ENCODE measurements at regions of chr17 and their contacts with region 1.

Region 1: DNA sequence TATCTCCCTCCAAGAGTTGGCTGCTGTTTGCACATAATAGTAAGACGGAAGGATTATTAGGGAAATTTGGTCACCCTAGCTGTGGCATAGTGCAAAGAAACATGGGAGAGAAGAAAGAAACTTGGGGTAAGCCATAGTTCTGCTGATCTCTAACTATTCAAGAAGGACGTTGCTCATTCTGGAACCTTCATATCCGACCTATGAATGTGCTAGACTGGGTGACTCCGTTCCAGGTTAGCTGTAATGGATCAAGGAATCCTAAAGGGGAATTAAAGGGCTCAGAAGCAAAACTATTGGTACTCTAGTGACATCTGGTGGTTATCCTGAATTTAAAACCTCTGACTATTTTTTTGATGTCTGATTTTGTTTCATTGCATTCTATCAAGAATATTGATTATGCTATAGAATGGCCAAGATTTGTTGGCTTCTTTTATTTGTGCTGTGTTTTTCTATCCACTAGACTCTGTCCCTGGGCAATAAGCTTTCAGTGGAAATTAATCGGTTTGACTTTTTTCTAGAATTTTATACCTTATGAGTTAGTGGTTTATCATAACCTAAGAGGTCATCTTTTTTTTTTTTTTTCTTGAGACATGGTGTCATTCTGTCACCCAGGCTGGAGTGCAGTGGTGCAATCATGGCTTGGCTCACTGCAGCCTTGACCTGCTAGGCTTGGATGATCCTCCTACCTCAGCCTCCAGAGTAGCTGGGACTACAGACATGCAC is 19.5 kb downstream of the PCTP start:
- DNase-seq: peak; percentile 68
- ATAC-seq: peak; percentile 67
- H3K4me3 ChIP-seq: no peak overlapping the region
- H3K27ac ChIP-seq: no peak overlapping the region
- H3K4me1 ChIP-seq: peaks cover 26% of the 10 kb centered on the region
- H3K27me3 ChIP-seq: no peaks in the 10 kb centered on the region
- CTCF ChIP-seq: peak; percentile 66
- EP300 ChIP-seq: no peak
- POLR2A ChIP-seq: no peak
- RAD21 ChIP-seq: peak; percentile 79

Region 2: GRCh38 chr17:55487695-55488429 is 282.4 kb before region 1 on chr17:
- CTCF ChIA-PET with region 1: no interaction called
- POLR2A ChIA-PET with region 1: no interaction called
- in situ Hi-C with region 1: no loop called
- intact Hi-C with region 1: no loop called
- DNase-seq: peak; percentile 55
- ATAC-seq: peak; percentile 98
- H3K4me3 ChIP-seq: no peak overlapping the region
- H3K27ac ChIP-seq: no peak overlapping the region
- H3K4me1 ChIP-seq: peaks cover 22% of the 10 kb centered on the region
- H3K27me3 ChIP-seq: no peaks in the 10 kb centered on the region
- CTCF ChIP-seq: no peak
- EP300 ChIP-seq: peak in 1 of 2 experiments; percentile 15; a peak in 1 of 4 replicates
- POLR2A ChIP-seq: no peak
- RAD21 ChIP-seq: no peak

Region 3: GRCh38 chr17:55601874-55602364 is 168.4 kb before region 1 on chr17:
- CTCF ChIA-PET with region 1: no interaction called
- POLR2A ChIA-PET with region 1: no interaction called
- in situ Hi-C with region 1: no loop called
- intact Hi-C with region 1: loop called (anchors 2 kb)
- DNase-seq: peak; percentile 39
- ATAC-seq: peak; percentile 89
- H3K4me3 ChIP-seq: no peak overlapping the region
- H3K27ac ChIP-seq: no peak overlapping the region
- H3K4me1 ChIP-seq: no peaks in the 10 kb centered on the region
- H3K27me3 ChIP-seq: no peaks in the 10 kb centered on the region
- CTCF ChIP-seq: peak; percentile 71
- EP300 ChIP-seq: no peak
- POLR2A ChIP-seq: no peak
- RAD21 ChIP-seq: peak; percentile 55; the same call in 1 of the 2 replicates

Region 4: GRCh38 chr17:55625521-55625920 is 144.8 kb before region 1 on chr17:
- CTCF ChIA-PET with region 1: no interaction called
- POLR2A ChIA-PET with region 1: no interaction called
- in situ Hi-C with region 1: no loop called
- intact Hi-C with region 1: no loop called
- DNase-seq: no peak
- ATAC-seq: no peak
- H3K4me3 ChIP-seq: no peak overlapping the region
- H3K27ac ChIP-seq: no peak overlapping the region
- H3K4me1 ChIP-seq: no peaks in the 10 kb centered on the region
- H3K27me3 ChIP-seq: no peaks in the 10 kb centered on the region
- CTCF ChIP-seq: no peak
- EP300 ChIP-seq: no peak
- POLR2A ChIP-seq: no peak
- RAD21 ChIP-seq: no peak

Region 5: GRCh38 chr17:55717898-55718735 is 52.2 kb before region 1 on chr17:
- CTCF ChIA-PET with region 1: interaction called, 10 read pairs
- POLR2A ChIA-PET with region 1: no interaction called
- in situ Hi-C with region 1: no loop called
- intact Hi-C with region 1: no loop called
- DNase-seq: peak; percentile 78
- ATAC-seq: peak; percentile 86
- H3K4me3 ChIP-seq: no peak overlapping the region
- H3K27ac ChIP-seq: no peak overlapping the region
- H3K4me1 ChIP-seq: no peaks in the 10 kb centered on the region
- H3K27me3 ChIP-seq: peaks cover 0 to 41% of the 10 kb centered on the region in 2 experiments; a peak in 3 of 5 replicates
- CTCF ChIP-seq: peak; percentile 74
- EP300 ChIP-seq: no peak
- POLR2A ChIP-seq: no peak
- RAD21 ChIP-seq: 0 out of 2 replicates have a peak, but pooled peaks have one; percentile 24

Region 6: GRCh38 chr17:55735731-55736405 is 34.4 kb before region 1 on chr17:
- CTCF ChIA-PET with region 1: no interaction called
- POLR2A ChIA-PET with region 1: no interaction called
- in situ Hi-C with region 1: loop called (anchors 5 kb)
- intact Hi-C with region 1: no loop called
- DNase-seq: peak; percentile 54
- ATAC-seq: peak; percentile 74
- H3K4me3 ChIP-seq: no peak overlapping the region
- H3K27ac ChIP-seq: no peak overlapping the region
- H3K4me1 ChIP-seq: peaks cover 11% of the 10 kb centered on the region
- H3K27me3 ChIP-seq: peaks cover 0 to 15% of the 10 kb centered on the region in 2 experiments; a peak in 1 of 5 replicates
- CTCF ChIP-seq: peak; percentile 69
- EP300 ChIP-seq: no peak
- POLR2A ChIP-seq: no peak
- RAD21 ChIP-seq: no peak

Region 7: GRCh38 chr17:55743103-55743679 is 27.1 kb before region 1 on chr17:
- CTCF ChIA-PET with region 1: interaction called, 17 read pairs
- POLR2A ChIA-PET with region 1: interaction called, 3 read pairs
- in situ Hi-C with region 1: loop called (anchors 5 kb)
- intact Hi-C with region 1: loop called (anchors 1 kb)
- DNase-seq: peak; percentile 88
- ATAC-seq: peak; percentile 78
- H3K4me3 ChIP-seq: peak overlapping the region in 2 of 3 experiments; percentile 33 to 34; a peak in 3 of 6 replicates
- H3K27ac ChIP-seq: no peak overlapping the region
- H3K4me1 ChIP-seq: peaks cover 45% of the 10 kb centered on the region
- H3K27me3 ChIP-seq: no peaks in the 10 kb centered on the region
- CTCF ChIP-seq: no peak
- EP300 ChIP-seq: peak in 1 of 2 experiments; percentile 50; a peak in 2 of 4 replicates
- POLR2A ChIP-seq: no peak
- RAD21 ChIP-seq: no peak

Region 8: GRCh38 chr17:55806745-55807495 is 36.6 kb after region 1 on chr17:
- CTCF ChIA-PET with region 1: no interaction called
- POLR2A ChIA-PET with region 1: no interaction called
- in situ Hi-C with region 1: no loop called
- intact Hi-C with region 1: no loop called
- DNase-seq: no peak
- ATAC-seq: no peak
- H3K4me3 ChIP-seq: no peak overlapping the region
- H3K27ac ChIP-seq: no peak overlapping the region
- H3K4me1 ChIP-seq: no peaks in the 10 kb centered on the region
- H3K27me3 ChIP-seq: no peaks in the 10 kb centered on the region
- CTCF ChIP-seq: no peak
- EP300 ChIP-seq: no peak
- POLR2A ChIP-seq: no peak
- RAD21 ChIP-seq: no peak

Measured in HepG2 (cell line).